ENCODE measurements at regions of chr20 and their contacts with region 1.

Region 1: DNA sequence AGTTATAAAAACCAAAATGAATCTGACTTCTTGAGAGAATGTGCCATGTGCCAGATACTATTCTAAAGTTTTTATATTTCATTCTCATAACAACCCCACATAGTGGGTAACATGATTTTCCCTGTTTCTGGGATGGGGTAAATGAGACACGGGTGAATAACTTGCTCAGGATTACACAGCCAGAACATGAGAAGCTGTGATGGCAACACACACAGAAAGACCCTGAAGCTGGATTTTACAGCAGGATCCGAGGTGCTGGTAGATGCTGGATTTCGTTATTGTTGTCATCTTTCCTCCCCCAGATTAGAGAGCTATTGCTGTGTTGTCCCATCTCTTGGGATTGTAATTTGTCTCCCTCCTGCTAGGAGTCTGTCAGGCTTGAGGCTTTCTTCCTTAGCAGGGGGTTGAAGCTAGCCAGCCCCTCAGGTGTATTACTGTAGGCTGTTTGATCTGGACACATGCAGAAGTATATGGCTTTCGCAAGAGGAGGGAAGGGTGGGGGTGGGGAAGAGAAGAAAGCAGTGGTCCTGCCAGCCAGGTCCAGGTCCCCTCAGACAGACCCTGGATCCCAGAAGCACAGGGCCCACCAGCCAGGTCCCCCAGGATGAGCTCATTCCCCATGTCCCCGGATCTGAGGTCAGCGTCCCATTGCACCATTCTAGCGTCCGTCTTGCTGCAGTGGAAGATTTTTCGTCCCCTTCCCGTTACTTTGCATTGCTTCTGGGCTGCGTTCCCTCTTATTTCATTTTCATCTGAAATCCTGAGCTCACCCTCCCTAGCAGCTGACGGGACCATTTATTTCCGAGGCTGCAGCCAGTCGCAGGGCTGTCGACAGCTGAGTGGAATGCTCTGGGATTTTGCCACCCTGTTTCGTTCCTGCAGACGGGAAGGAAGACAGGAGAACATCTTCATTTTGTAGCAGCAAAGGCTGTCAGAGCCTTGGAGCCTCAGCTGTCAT is 7.3 kb upstream of the KCNG1 start:
- DNase-seq: no peak
- ATAC-seq: no peak
- H3K4me3 ChIP-seq: no peak overlapping the region
- H3K27ac ChIP-seq: no peak overlapping the region
- H3K4me1 ChIP-seq: no peaks in the 10 kb centered on the region
- H3K27me3 ChIP-seq: peaks cover 5% of the 10 kb centered on the region in 2 experiments
- CTCF ChIP-seq: no peak
- EP300 ChIP-seq: no peak
- POLR2A ChIP-seq: no peak
- RAD21 ChIP-seq: no peak

Region 2: DNA sequence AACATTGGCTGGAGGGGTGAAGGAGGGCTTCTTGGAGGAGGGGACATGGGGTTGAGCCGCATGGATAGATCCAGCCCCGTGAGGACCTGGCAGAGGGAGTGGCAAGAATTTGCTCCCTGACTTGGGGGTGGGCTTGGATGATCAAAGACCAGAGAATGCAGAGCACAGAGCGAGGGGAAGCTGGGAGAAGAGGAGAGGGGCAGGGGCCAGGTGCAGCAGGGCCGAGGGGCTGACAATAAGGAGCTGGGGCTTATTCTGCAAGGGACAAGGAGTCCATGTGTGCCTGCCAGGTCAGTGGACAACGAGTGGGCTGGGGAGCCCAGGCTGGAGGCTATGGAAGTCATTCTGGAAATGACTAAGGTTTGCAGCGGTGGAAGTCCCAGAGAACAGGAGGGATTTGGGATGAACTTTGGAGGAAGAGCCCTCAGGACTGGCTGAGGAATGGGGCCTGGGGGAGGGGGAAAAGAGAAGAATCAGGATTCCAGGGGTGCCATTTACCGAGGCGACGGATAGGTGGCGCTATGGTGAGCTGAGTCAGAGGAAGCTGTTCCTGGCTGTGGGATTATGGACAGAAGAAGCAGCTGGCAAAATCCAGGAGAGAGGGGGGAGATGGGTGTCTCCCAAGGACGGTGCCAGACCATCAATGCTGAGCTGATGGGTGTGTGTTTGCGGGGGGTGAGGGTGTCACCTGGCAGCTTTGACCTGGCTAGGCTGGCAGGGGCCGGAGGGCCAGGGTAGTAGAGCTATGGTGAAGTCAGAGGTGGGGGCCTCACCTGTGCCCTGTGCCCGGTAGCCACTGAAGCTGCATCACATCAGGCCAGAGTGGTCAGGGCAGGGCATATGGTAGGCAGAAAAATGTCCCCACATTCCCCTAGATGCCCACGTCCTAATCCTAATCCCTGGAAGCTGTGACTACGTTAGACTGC is 15.2 kb before region 1 on chr20:
- CTCF ChIA-PET with region 1: interaction called, 12 read pairs
- POLR2A ChIA-PET with region 1: no interaction called
- RAD21 ChIA-PET with region 1: no interaction called
- SMC1A ChIA-PET with region 1: no interaction called
- in situ Hi-C with region 1: no loop called
- intact Hi-C with region 1: no loop called
- DNase-seq: no peak
- ATAC-seq: no peak
- H3K4me3 ChIP-seq: no peak overlapping the region
- H3K27ac ChIP-seq: no peak overlapping the region
- H3K4me1 ChIP-seq: no peaks in the 10 kb centered on the region
- H3K27me3 ChIP-seq: peaks cover 2 to 7% of the 10 kb centered on the region in 2 experiments; a peak in 3 of 4 replicates
- CTCF ChIP-seq: peak; percentile 49 to 64 (median 62); a peak in 5 of 6 replicates
- EP300 ChIP-seq: no peak
- POLR2A ChIP-seq: no peak
- RAD21 ChIP-seq: peak; percentile 34; the same call in 1 of the 2 replicates

Measured in GM12878 (cell line).